PC-9 (cell line): ENCODE measurements at regions of chr2 and their contacts with region 1.

Region 1: DNA sequence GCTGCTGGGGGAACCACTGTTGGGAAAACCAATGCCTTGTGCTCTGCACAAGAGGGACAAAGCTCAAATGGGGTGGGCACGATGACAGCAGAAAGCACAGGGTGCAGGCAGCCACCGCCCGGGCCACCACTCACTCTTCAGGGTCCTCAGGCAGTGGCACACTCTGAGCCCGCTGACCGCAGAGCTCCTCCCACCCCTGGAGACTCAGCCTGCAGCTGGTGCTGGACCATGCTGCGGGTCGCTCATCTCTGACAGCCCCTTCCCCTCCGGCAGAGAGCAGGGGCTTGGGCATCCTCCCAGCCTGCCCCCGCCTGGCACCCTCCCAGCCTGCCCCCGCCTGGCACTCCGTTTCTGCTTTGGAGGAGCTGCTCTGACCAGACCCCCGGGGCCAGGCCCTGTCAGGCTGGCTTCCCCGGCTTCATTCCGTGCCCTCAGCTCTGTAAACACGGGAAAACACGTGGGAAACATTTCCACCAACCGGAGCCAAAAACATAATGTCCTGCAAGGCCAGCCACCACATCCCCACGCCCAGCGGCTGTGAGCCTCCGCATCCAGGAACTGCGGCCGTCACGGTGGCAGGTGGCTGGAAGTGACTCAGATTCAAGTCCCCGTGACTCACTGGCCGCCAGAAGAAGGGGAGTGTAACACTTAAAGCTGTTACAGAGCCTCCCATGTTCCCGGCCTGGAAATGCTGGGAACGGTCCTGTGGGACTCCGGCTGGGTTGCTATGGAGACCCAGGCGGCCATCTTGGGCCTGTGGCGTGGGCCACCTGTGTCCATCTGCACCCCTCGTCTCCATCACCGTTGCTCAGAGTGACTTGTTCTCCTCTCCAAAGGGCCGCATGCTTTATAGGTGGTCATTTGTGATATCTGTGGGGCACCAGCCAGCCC is 6.8 kb upstream of the SNED1 start:
- DNase-seq: peak; percentile 95 to 96
- H3K4me3 ChIP-seq: no peak overlapping the region
- H3K27ac ChIP-seq: peak overlapping the region; percentile 18; the same call in 1 of the 2 replicates
- H3K4me1 ChIP-seq: peaks cover 27% of the 10 kb centered on the region
- H3K27me3 ChIP-seq: no peaks in the 10 kb centered on the region
- CTCF ChIP-seq: no peak

Region 2: GRCh38 chr2:240856151-240856980 is 135.3 kb before region 1 on chr2:
- CTCF ChIA-PET with region 1: interaction called, 5 read pairs
- POLR2A ChIA-PET with region 1: no interaction called
- intact Hi-C with region 1: loop called (anchors 1 kb)
- DNase-seq: peak in 1 of 2 experiments; percentile 71
- H3K4me3 ChIP-seq: no peak overlapping the region
- H3K27ac ChIP-seq: no peak overlapping the region
- H3K4me1 ChIP-seq: 0 out of 2 replicates have a peak, but pooled peaks cover 7% of the 10 kb centered on the region
- H3K27me3 ChIP-seq: no peaks in the 10 kb centered on the region
- CTCF ChIP-seq: peak; percentile 59; the same call in 1 of the 2 replicates

Region 3: DNA sequence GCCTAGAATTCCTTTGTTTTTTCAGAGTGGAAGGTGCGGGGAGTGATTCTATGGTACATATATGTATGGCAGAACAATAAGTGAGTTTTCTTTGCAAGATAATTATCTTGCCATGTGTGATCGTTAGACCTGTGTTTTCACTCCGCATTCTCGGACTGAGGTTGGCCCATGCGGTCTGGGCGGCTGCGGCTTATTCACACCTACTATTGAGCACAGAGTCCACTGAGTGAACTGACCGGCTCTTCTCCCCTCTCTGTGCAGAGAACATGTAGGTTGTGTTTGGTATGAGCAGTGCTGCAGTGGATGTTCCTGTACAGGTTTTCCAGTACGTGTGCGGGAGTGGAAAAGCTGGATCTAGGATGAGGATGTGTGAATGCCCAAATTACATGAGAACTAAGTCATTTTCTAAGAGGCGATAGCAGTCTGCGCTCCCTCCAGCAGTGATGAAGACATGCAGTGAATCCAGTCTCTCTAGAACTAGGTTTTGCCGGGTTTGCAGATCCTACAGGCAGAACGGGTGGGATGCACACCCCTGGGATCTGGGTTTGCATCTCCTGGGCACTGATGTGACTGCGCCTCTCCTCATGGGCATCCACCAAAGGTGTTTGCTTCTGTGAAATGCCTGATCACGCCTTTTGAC is 83.4 kb after region 1 on chr2:
- CTCF ChIA-PET with region 1: no interaction called
- POLR2A ChIA-PET with region 1: no interaction called
- intact Hi-C with region 1: loop called (anchors 5 kb)
- DNase-seq: no peak
- H3K4me3 ChIP-seq: no peak overlapping the region
- H3K27ac ChIP-seq: no peak overlapping the region
- H3K4me1 ChIP-seq: no peaks in the 10 kb centered on the region
- H3K27me3 ChIP-seq: peaks cover 25% of the 10 kb centered on the region
- CTCF ChIP-seq: no peak

Region 4: DNA sequence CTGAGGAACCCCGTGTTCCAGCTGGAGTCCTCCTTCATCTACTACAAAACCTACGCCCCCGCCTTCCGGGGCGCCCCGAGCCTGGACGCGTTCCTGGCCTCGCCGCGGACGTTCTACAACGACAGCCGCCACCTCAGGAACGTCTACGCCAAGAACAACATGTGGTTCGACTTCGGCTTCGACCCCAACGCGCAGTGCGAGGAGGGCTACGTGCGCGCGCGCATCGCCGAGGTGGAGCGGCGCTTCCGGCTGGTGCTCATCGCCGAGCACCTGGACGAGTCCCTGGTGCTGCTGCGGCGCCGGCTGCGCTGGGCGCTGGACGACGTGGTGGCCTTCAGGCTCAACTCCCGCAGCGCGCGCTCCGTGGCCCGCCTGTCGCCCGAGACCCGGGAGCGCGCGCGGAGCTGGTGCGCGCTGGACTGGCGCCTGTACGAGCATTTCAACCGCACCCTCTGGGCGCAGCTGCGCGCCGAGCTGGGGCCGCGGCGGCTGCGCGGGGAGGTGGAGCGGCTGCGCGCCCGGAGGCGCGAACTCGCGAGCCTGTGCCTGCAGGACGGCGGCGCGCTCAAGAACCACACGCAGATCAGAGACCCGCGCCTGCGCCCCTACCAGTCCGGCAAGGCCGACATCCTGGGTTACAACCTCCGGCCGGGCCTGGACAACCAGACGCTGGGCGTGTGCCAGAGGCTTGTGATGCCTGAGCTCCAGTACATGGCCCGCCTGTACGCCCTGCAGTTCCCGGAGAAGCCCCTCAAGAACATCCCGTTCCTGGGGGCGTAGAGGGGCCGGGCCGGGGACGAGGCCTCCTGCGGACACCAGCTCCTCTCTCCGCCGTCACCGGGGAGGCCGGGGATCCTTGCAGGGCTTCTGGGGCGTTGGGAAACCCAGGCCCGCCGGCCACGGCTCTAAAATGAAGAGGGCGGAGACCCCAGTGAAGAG is 812.0 kb after region 1 on chr2:
- CTCF ChIA-PET with region 1: no interaction called
- POLR2A ChIA-PET with region 1: no interaction called
- intact Hi-C with region 1: no loop called
- DNase-seq: peak in 1 of 2 experiments; percentile 61
- H3K4me3 ChIP-seq: no peak overlapping the region
- H3K27ac ChIP-seq: no peak overlapping the region
- H3K4me1 ChIP-seq: no peaks in the 10 kb centered on the region
- H3K27me3 ChIP-seq: peaks cover 8% of the 10 kb centered on the region
- CTCF ChIP-seq: no peak